B cell (primary cell): ENCODE measurements at regions of chr2 and their contacts with region 1.

Region 1: GRCh38 chr2:219155054-219155644 is 5.5 kb downstream of the NHEJ1 start:
- DNase-seq: peak; percentile 74
- ATAC-seq: no peak
- H3K4me3 ChIP-seq: no peak overlapping the region
- H3K4me3 Mint-ChIP-seq: no peak overlapping the region
- H3K27ac ChIP-seq: no peak overlapping the region
- H3K27ac Mint-ChIP-seq: no peak overlapping the region
- H3K4me1 ChIP-seq: peaks cover 5 to 9% of the 10 kb centered on the region in 2 donors
- H3K4me1 Mint-ChIP-seq: peaks cover 9% of the 10 kb centered on the region
- H3K27me3 ChIP-seq: no peaks in the 10 kb centered on the region
- H3K27me3 Mint-ChIP-seq: no peaks in the 10 kb centered on the region
- CTCF ChIP-seq: peak; percentile 87

Region 2: DNA sequence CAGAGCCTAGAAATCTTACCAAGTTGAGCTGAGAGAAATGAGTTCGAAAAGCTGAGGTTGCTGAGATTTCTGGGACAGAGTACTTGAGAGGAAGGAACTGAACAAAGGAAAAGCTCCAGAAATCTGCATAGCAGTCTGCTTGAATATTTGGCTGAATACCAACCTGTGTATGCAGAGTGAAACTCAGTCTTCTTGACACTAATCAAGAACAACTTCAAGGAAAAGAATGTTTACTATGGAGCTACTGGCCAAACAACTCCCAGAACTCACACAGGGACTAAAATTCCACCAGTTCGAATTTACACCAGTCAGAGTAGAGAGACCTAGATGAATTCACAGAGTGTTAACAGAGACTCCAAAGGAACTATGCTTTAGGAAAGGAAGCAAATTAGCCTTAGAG is 653.5 kb before region 1 on chr2:
- CTCF ChIA-PET with region 1: no interaction called
- POLR2A ChIA-PET with region 1: no interaction called
- intact Hi-C with region 1: no loop called
- DNase-seq: no peak
- ATAC-seq: no peak
- H3K4me3 ChIP-seq: no peak overlapping the region
- H3K4me3 Mint-ChIP-seq: no peak overlapping the region
- H3K27ac ChIP-seq: no peak overlapping the region
- H3K27ac Mint-ChIP-seq: no peak overlapping the region
- H3K4me1 ChIP-seq: no peaks in the 10 kb centered on the region
- H3K4me1 Mint-ChIP-seq: peaks cover 2% of the 10 kb centered on the region
- H3K27me3 ChIP-seq: no peaks in the 10 kb centered on the region
- H3K27me3 Mint-ChIP-seq: no peaks in the 10 kb centered on the region
- CTCF ChIP-seq: no peak

Region 3: DNA sequence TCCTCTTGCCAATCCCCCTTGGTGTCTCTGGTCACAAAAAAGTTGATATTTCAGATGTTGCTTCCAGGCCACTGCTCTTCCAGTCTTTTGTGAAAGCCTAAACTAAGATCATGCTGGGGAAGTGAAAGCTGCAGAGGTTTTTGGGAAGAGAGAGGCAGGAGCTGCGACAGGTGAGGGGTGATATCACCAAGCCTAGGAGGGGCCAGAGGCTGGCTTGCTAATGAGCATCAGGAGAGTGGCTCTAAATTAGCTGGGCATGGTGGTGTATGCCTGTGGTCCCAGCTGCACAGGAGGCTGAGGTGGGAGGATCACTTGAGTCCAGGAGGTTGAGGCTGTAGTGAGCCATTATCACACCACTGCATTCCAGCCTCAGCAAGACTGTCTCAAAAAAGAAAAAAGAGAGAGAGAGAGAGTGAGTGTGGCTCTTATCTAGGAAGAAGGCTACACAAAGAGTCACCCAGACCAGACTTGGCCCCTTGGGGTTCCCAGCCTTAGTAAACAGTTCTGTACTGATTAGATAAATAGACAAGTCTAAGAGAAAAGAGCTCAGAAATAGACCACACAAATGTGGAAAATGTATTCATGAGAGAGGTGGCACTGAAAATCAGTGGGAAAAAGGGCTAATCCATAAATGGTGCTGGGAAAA is 210.3 kb before region 1 on chr2:
- CTCF ChIA-PET with region 1: no interaction called
- POLR2A ChIA-PET with region 1: no interaction called
- intact Hi-C with region 1: no loop called
- DNase-seq: no peak
- ATAC-seq: no peak
- H3K4me3 ChIP-seq: no peak overlapping the region
- H3K4me3 Mint-ChIP-seq: no peak overlapping the region
- H3K27ac ChIP-seq: no peak overlapping the region
- H3K27ac Mint-ChIP-seq: no peak overlapping the region
- H3K4me1 ChIP-seq: no peaks in the 10 kb centered on the region
- H3K4me1 Mint-ChIP-seq: no peaks in the 10 kb centered on the region
- H3K27me3 ChIP-seq: peaks cover 0 to 31% (median 15%) of the 10 kb centered on the region in 4 experiments
- H3K27me3 Mint-ChIP-seq: peaks cover 54% of the 10 kb centered on the region
- CTCF ChIP-seq: no peak

Region 4: DNA sequence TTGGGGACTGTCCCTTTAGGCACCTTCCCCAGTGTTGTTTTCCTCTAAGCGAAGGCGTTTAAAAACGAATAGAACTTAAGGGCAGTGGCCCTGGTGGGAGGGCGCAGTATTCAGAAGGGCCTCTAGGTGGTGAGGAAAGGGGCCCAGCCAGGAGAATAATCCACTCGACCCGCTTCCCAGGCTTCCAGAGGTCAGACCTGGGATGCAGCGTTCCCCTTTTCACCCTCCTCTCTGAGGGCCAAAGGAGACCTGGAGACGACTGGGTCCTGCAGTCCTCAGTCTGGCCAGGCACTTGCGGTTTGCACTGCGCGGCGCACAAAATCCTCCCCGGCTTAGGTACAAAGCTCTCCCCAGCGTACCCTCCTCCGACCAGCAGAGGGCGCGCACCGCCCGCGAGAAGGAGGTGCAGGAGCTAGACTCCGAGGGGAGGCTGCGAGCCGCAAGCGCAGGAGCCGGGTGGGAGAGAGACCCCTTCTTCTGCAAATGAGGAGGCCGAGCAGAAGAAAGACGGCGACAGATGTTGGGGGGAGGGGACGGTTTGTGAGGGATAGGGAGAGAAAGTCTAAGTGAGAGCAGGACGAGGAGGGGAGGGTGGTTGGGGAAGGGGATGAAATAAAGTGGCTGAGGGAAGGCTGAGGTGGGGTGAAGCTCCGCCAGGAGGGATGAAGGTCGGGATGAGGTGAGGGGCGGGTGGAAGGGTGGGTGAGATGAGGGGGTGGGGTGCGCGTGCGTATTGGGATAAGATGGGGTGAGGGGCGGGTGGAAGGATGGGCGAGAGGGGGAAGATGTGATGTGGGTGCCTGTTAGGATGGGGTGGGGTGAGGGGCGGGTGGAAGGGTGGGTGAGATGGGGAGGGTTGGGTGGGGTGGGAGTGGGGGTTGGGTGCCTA is 175.1 kb before region 1 on chr2:
- CTCF ChIA-PET with region 1: interaction called, 6 read pairs
- POLR2A ChIA-PET with region 1: no interaction called
- intact Hi-C with region 1: loop called (anchors 1 kb)
- DNase-seq: peak; percentile 91
- ATAC-seq: peak; percentile 85
- H3K4me3 ChIP-seq: peak overlapping the region in 4 of 5 experiments; percentile 3 to 45 (median 26)
- H3K4me3 Mint-ChIP-seq: peak overlapping the region; percentile 85
- H3K27ac ChIP-seq: no peak overlapping the region
- H3K27ac Mint-ChIP-seq: peak overlapping the region; percentile 63
- H3K4me1 ChIP-seq: peaks cover 37 to 51% of the 10 kb centered on the region in 2 donors
- H3K4me1 Mint-ChIP-seq: peaks cover 28% of the 10 kb centered on the region
- H3K27me3 ChIP-seq: peaks cover 0 to 79% (median 55%) of the 10 kb centered on the region in 4 experiments
- H3K27me3 Mint-ChIP-seq: peaks cover 65% of the 10 kb centered on the region
- CTCF ChIP-seq: peak; percentile 87

Region 5: GRCh38 chr2:219029829-219030165 is 125.4 kb before region 1 on chr2:
- CTCF ChIA-PET with region 1: interaction called, 99 read pairs
- POLR2A ChIA-PET with region 1: no interaction called
- intact Hi-C with region 1: no loop called
- DNase-seq: peak; percentile 79
- ATAC-seq: peak; percentile 89
- H3K4me3 ChIP-seq: no peak overlapping the region
- H3K4me3 Mint-ChIP-seq: no peak overlapping the region
- H3K27ac ChIP-seq: no peak overlapping the region
- H3K27ac Mint-ChIP-seq: no peak overlapping the region
- H3K4me1 ChIP-seq: no peaks in the 10 kb centered on the region
- H3K4me1 Mint-ChIP-seq: no peaks in the 10 kb centered on the region
- H3K27me3 ChIP-seq: peaks cover 0 to 18% (median 2%) of the 10 kb centered on the region in 4 experiments
- H3K27me3 Mint-ChIP-seq: peaks cover 44% of the 10 kb centered on the region
- CTCF ChIP-seq: peak; percentile 99

Region 6: DNA sequence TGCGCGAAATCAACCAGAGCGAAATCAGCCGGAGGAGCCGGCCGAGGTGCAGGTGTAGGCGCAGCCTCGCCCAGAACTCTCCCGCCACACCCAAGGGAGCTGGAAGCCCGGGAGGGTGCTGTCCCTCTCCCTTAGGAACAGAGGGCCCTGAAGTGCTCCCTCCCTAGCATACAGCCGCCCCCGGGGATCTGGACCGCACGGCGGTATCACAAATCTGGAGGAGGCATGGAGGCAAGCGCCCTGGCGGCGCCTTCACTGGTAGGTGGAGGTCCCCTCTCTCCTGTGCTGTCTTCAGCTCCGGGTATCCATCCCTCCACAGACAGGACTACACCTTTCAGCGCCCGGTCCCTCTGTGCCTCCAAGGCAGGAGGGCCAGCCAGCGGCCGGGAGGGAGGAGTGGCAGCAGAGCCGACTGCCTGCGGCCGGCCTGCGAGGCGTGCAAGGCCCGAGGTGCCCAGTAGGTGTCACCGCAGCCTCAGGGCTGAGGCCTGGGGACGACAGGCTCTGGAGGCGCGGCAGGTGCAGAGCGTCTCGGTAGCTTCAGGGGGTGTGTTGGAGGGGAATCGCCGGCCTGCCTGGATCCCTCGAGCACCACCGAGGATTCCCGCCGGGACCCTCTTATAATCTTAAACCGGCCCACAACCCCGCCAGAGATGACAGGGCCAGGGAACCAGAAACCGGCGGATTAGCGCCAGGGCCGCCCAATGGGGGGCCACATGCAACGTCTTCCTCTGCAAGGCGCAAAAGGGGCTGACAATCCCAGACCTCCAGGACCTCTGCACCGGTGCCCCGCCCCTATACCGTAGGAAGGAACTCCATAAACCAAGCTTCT is 97.2 kb before region 1 on chr2:
- CTCF ChIA-PET with region 1: interaction called, 117 read pairs
- POLR2A ChIA-PET with region 1: interaction called, 4 read pairs
- intact Hi-C with region 1: loop called (anchors 1 kb)
- DNase-seq: peak; percentile 85
- ATAC-seq: peak; percentile 98
- H3K4me3 ChIP-seq: peak overlapping the region in 2 of 5 experiments; percentile 12 to 35
- H3K4me3 Mint-ChIP-seq: peak overlapping the region; percentile 74
- H3K27ac ChIP-seq: no peak overlapping the region
- H3K27ac Mint-ChIP-seq: peak overlapping the region; percentile 46
- H3K4me1 ChIP-seq: peaks cover 35 to 41% of the 10 kb centered on the region in 2 donors
- H3K4me1 Mint-ChIP-seq: peaks cover 24% of the 10 kb centered on the region
- H3K27me3 ChIP-seq: peaks cover 0 to 59% (median 45%) of the 10 kb centered on the region in 4 experiments
- H3K27me3 Mint-ChIP-seq: peaks cover 50% of the 10 kb centered on the region
- CTCF ChIP-seq: peak; percentile 91

Region 7: DNA sequence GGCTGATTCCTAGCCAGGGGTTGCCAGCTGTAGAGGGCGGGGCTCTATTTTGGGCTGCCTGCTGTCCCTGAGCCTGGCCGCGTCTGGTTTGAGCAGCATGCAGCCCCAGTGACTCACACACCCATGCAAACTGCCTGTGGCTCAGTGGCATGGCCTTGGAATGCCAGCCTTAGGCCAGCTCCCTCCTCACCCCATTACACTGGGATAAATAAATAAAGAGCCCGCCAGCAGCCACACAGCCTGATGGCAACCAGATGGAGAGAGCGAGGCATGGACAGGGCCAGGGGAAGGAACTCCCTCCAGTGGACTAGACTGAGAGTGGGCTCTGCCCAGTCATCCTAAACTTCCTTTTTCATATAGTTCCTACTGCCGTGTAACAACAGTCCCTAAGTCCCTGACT is 12.8 kb before region 1 on chr2:
- CTCF ChIA-PET with region 1: interaction called, 15 read pairs
- POLR2A ChIA-PET with region 1: no interaction called
- intact Hi-C with region 1: no loop called
- DNase-seq: no peak
- ATAC-seq: no peak
- H3K4me3 ChIP-seq: no peak overlapping the region
- H3K4me3 Mint-ChIP-seq: no peak overlapping the region
- H3K27ac ChIP-seq: no peak overlapping the region
- H3K27ac Mint-ChIP-seq: no peak overlapping the region
- H3K4me1 ChIP-seq: no peaks in the 10 kb centered on the region
- H3K4me1 Mint-ChIP-seq: no peaks in the 10 kb centered on the region
- H3K27me3 ChIP-seq: no peaks in the 10 kb centered on the region
- H3K27me3 Mint-ChIP-seq: no peaks in the 10 kb centered on the region
- CTCF ChIP-seq: no peak

Region 8: DNA sequence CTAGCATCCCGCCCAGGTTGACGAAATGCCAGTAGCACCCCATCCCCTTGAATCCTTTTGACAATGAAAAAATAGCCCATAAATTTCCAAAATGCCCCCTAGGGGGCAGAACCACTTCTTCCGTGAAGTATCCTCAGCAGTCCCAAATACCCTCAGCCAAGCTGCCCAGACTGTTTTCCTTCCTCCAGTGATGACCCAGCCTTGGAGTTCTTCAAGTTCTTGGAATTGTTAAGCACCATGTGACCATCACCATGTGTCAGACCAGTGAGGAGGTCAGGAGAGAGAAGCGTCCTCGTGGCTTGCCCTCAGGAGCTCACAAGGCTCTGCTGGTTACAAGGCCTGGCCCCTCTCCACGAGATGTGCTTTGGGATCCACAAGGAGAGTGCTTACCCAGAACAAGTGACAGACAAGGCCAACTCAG is 16.1 kb after region 1 on chr2:
- CTCF ChIA-PET with region 1: interaction called, 17 read pairs
- POLR2A ChIA-PET with region 1: interaction called, 8 read pairs
- intact Hi-C with region 1: loop called (anchors 1 kb)
- DNase-seq: peak; percentile 67
- ATAC-seq: peak; percentile 52
- H3K4me3 ChIP-seq: no peak overlapping the region
- H3K4me3 Mint-ChIP-seq: no peak overlapping the region
- H3K27ac ChIP-seq: peak overlapping the region in 1 of 2 donors; percentile 21
- H3K27ac Mint-ChIP-seq: peak overlapping the region; percentile 67
- H3K4me1 ChIP-seq: peaks cover 6 to 28% of the 10 kb centered on the region in 2 donors
- H3K4me1 Mint-ChIP-seq: peaks cover 25% of the 10 kb centered on the region
- H3K27me3 ChIP-seq: no peaks in the 10 kb centered on the region
- H3K27me3 Mint-ChIP-seq: no peaks in the 10 kb centered on the region
- CTCF ChIP-seq: peak; percentile 83

Region 9: GRCh38 chr2:219417374-219417773 is 262.2 kb after region 1 on chr2:
- CTCF ChIA-PET with region 1: no interaction called
- POLR2A ChIA-PET with region 1: interaction called, 12 read pairs
- intact Hi-C with region 1: no loop called
- DNase-seq: no peak
- ATAC-seq: no peak
- H3K4me3 ChIP-seq: no peak overlapping the region
- H3K4me3 Mint-ChIP-seq: no peak overlapping the region
- H3K27ac ChIP-seq: no peak overlapping the region
- H3K27ac Mint-ChIP-seq: no peak overlapping the region
- H3K4me1 ChIP-seq: no peaks in the 10 kb centered on the region
- H3K4me1 Mint-ChIP-seq: peaks cover 1% of the 10 kb centered on the region
- H3K27me3 ChIP-seq: peaks cover 0 to 42% (median 6%) of the 10 kb centered on the region in 4 experiments
- H3K27me3 Mint-ChIP-seq: peaks cover 48% of the 10 kb centered on the region
- CTCF ChIP-seq: no peak

Region 10: DNA sequence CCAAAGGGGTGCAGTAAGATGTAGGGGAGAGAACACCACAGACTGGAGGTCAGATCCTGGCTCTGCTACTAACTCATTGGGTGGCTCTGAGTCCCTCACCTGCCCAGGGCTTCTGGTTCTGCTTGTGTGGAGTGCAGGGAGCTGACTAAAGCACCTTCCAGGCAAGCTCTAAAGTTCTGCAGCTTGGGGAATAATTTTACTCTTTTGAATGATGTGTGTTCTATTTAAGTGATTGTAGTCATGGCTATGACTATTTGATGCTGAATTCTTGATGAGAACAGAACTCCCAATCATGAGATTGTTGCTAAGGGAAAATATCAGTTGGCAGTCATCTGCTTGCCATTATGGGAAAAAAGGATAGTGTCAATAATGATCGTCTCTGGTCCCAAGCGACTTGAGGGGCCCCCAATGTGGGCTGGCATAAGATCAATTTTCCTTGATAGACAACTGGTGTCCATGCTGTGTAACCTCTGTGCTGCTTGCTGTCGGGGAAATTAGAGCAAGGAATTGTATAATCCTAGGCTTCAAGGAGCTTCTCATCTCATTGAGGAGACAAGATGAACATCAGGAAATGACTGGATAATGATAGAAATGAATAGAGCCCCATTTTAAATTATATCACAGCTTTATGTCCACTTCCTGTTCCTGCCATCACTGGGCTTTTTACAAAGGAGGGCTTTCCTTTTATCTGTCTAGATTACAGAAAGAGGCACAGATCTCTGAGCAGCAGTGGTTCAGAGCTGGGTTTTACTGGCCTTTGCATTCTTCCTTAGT is 603.9 kb after region 1 on chr2:
- CTCF ChIA-PET with region 1: no interaction called
- POLR2A ChIA-PET with region 1: no interaction called
- intact Hi-C with region 1: no loop called
- DNase-seq: no peak
- ATAC-seq: no peak
- H3K4me3 ChIP-seq: no peak overlapping the region
- H3K4me3 Mint-ChIP-seq: no peak overlapping the region
- H3K27ac ChIP-seq: no peak overlapping the region
- H3K27ac Mint-ChIP-seq: no peak overlapping the region
- H3K4me1 ChIP-seq: no peaks in the 10 kb centered on the region
- H3K4me1 Mint-ChIP-seq: no peaks in the 10 kb centered on the region
- H3K27me3 ChIP-seq: no peaks in the 10 kb centered on the region
- H3K27me3 Mint-ChIP-seq: peaks cover 3% of the 10 kb centered on the region
- CTCF ChIP-seq: no peak